ENCODE measurements at regions of chr10 and their contacts with region 1.

Region 1: GRCh38 chr10:44386546-44387052 is 1.7 kb upstream of the CXCL12 start:
- DNase-seq: peak in 4 of 5 donors; percentile 5 to 22 (median 10)
- H3K4me3 ChIP-seq: no peak overlapping the region
- H3K4me3 Mint-ChIP-seq: no peak overlapping the region
- H3K27ac ChIP-seq: no peak overlapping the region
- H3K27ac Mint-ChIP-seq: no peak overlapping the region
- H3K4me1 ChIP-seq: no peaks in the 10 kb centered on the region
- H3K4me1 Mint-ChIP-seq: peaks cover 2 to 10% (median 4%) of the 10 kb centered on the region in 4 donors
- H3K27me3 ChIP-seq: no peaks in the 10 kb centered on the region
- H3K27me3 Mint-ChIP-seq: peaks cover 14 to 23% of the 10 kb centered on the region in 2 donors

Region 2: DNA sequence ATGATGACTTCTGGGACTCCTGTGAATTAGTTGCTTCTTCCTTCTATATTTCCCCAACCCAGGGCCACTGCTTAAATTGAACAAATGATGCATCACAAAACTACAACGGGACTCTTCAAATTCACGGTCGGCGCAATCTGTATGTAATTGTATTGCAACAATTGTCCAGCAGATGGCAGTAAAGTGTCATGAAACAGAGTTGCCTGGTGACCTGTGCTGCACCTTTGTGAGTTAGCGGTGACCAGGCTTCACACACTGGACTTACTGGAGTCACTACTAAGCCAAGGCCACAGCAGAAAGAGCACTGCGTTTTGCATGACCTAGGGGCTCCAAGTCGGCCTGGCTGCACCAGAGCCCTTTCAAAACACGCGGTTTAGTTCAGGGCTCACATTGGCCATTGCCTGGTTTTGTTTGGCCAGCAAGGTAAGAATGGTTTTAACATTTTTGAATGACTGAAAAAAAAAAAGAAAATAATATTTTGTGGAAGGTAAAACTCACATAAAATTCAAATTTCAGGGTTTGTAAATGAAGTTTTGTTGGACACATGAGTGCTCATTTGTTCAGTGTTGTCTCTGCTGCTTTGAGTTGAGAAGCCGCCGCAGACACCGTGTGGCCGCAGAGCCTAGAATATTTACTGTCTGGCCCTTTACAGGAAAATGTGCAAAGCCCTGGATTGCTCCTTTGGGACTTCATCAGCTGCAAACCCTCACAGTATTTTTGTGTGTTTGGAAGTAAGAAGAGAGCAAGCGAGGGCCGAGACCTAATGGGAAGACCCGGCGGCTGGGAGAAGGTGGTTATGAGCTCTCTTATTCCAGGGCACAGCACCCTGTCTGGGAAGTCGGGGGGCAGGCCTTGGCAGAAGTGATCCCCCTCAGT is 714.7 kb before region 1 on chr10:
- CTCF ChIA-PET with region 1: interaction called, 15 read pairs
- POLR2A ChIA-PET with region 1: no interaction called
- intact Hi-C with region 1: no loop called
- DNase-seq: peak in 4 of 5 donors; percentile 49 to 65 (median 54)
- H3K4me3 ChIP-seq: no peak overlapping the region
- H3K4me3 Mint-ChIP-seq: no peak overlapping the region
- H3K27ac ChIP-seq: no peak overlapping the region
- H3K27ac Mint-ChIP-seq: no peak overlapping the region
- H3K4me1 ChIP-seq: no peaks in the 10 kb centered on the region
- H3K4me1 Mint-ChIP-seq: peaks cover 0 to 7% (median 2%) of the 10 kb centered on the region in 4 donors
- H3K27me3 ChIP-seq: peaks cover 10% of the 10 kb centered on the region
- H3K27me3 Mint-ChIP-seq: peaks cover 27 to 32% of the 10 kb centered on the region in 2 donors

Region 3: GRCh38 chr10:44261710-44262455 is 124.7 kb before region 1 on chr10:
- CTCF ChIA-PET with region 1: no interaction called
- POLR2A ChIA-PET with region 1: no interaction called
- intact Hi-C with region 1: no loop called
- DNase-seq: no peak
- H3K4me3 ChIP-seq: no peak overlapping the region
- H3K4me3 Mint-ChIP-seq: no peak overlapping the region
- H3K27ac ChIP-seq: no peak overlapping the region
- H3K27ac Mint-ChIP-seq: no peak overlapping the region
- H3K4me1 ChIP-seq: no peaks in the 10 kb centered on the region
- H3K4me1 Mint-ChIP-seq: no peaks in the 10 kb centered on the region
- H3K27me3 ChIP-seq: no peaks in the 10 kb centered on the region
- H3K27me3 Mint-ChIP-seq: peaks cover 2 to 4% of the 10 kb centered on the region in 2 donors

Region 4: DNA sequence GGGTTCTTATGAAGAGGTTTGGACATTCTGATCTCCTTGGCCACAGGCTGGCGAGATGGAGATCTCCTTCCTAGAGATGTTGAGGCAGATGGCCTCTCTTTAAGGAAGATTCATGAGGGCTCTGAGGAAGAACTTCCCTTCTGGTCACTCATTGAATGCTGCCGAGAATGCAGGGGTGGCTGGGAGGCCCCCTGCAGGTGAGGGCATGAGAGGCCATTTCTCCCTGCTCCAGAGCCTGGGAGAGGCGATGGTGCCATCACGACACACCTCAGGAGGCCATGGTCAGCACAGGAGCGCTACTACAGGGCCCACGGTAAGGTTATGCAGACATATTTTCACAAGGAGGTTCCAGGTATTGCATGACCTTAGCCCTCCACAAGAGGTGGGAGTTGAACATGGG is 41.9 kb before region 1 on chr10:
- CTCF ChIA-PET with region 1: no interaction called
- POLR2A ChIA-PET with region 1: no interaction called
- intact Hi-C with region 1: no loop called
- DNase-seq: no peak
- H3K4me3 ChIP-seq: no peak overlapping the region
- H3K4me3 Mint-ChIP-seq: no peak overlapping the region
- H3K27ac ChIP-seq: no peak overlapping the region
- H3K27ac Mint-ChIP-seq: no peak overlapping the region
- H3K4me1 ChIP-seq: no peaks in the 10 kb centered on the region
- H3K4me1 Mint-ChIP-seq: no peaks in the 10 kb centered on the region
- H3K27me3 ChIP-seq: no peaks in the 10 kb centered on the region
- H3K27me3 Mint-ChIP-seq: peaks cover 3 to 4% of the 10 kb centered on the region in 2 donors

Region 5: DNA sequence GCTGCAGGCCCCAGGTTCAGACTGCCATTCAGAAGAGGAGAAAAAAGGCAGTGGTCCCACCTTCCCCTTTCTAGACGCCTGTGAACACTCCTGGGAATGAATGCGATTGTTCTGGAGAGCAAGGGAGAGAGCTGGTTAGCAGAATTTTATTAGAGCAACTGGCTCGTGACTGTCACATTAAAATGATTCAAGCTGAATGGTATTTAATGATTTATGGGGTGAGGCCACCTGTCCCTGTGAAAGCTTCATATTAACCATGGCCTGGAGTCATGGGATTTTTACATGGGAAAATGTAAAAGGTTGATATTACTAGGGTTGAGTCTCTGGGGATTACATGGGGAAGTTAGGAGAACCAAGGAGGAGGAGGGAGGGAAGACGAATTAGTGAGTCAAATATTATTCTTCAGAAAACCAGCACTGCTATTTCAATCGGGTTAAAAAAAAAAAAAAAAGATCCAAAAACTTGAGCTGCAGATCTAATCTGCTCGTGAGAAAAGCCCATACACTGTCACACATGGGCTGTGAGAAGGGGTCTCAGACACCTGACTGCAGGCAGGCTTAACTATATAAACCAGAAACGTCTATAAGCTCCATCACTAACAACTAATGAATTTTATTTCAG is 10.0 kb before region 1 on chr10:
- CTCF ChIA-PET with region 1: interaction called, 10 read pairs
- POLR2A ChIA-PET with region 1: no interaction called
- intact Hi-C with region 1: no loop called
- DNase-seq: no peak
- H3K4me3 ChIP-seq: no peak overlapping the region
- H3K4me3 Mint-ChIP-seq: no peak overlapping the region
- H3K27ac ChIP-seq: no peak overlapping the region
- H3K27ac Mint-ChIP-seq: no peak overlapping the region
- H3K4me1 ChIP-seq: no peaks in the 10 kb centered on the region
- H3K4me1 Mint-ChIP-seq: peaks cover 0 to 1% (median 0%) of the 10 kb centered on the region in 4 donors
- H3K27me3 ChIP-seq: no peaks in the 10 kb centered on the region
- H3K27me3 Mint-ChIP-seq: peaks cover 0 to 2% of the 10 kb centered on the region in 2 donors

Region 6: DNA sequence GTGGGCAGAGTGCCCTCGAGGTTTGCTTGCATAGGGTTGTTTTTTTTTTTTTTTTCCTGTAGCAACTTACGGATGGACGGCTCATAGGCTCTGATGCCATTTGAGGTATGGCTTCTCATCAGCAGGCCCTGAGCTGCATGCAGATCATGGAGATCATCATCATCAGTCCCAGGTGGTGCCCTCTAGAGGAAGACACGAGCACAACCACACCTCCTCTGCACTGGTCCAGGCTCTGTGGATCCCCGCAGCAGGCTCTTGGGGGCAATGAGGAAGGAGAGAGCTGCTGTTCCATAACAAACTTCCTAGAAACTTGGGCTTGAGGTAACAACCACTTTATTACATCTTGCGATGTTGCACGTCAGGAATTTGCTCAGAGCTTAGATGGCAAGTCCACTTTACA is 131.0 kb after region 1 on chr10:
- CTCF ChIA-PET with region 1: no interaction called
- POLR2A ChIA-PET with region 1: no interaction called
- intact Hi-C with region 1: no loop called
- DNase-seq: no peak
- H3K4me3 ChIP-seq: no peak overlapping the region
- H3K4me3 Mint-ChIP-seq: no peak overlapping the region
- H3K27ac ChIP-seq: no peak overlapping the region
- H3K27ac Mint-ChIP-seq: no peak overlapping the region
- H3K4me1 ChIP-seq: no peaks in the 10 kb centered on the region
- H3K4me1 Mint-ChIP-seq: no peaks in the 10 kb centered on the region
- H3K27me3 ChIP-seq: no peaks in the 10 kb centered on the region
- H3K27me3 Mint-ChIP-seq: no peaks in the 10 kb centered on the region